Activated B cell treated with CpG ODN at 0.5 μM for 24 hours (primary cell): ENCODE measurements at regions of chr22 and their contacts with region 1.

Region 1: DNA sequence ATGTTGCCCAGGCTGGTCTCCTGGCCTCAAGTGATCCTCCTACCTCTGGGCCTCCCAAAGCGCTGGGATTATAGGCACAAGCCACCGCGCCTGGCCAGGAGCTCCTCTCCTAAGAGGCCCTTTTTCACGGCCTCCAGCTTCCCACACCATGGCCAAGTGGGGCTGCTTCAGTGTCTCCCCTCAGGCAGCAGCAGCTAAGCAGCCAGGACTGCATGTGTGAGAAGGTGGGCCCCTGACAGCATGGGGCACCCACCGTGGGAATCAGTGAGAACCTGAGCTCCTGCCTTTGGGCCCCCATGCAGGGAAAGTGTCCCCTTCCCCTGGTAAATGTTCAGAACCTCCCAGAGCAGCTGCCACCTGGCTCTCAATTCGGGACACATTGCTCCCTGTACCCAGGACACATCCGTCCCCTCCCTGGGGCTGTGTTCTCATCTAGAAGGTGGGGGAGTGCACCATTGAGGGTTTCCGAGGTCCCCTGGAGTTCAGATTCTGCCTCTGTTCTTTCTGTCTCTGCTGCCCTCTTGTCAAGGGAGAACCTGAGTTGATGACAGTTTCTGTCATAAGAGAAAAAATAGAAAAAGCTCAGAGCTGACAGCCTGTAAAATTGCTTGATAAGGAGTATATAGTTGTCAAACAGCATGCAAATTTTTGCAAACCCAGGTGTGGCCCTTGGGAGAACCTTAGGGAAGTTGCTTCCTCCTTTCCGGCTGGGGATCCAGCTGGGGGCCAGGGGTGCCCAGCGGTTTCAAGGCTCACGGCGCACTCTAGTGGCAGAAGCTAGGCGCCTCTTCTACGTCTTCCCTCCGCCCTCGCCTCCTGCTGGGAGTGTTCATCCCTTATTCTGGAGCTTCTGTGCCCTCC is 29.7 kb downstream of the FAM83F start:
- DNase-seq: peak; percentile 46
- ATAC-seq: peak; percentile 87
- H3K4me3 Mint-ChIP-seq: no peak overlapping the region
- H3K27ac Mint-ChIP-seq: no peak overlapping the region
- H3K4me1 Mint-ChIP-seq: peaks cover 5% of the 10 kb centered on the region
- H3K27me3 Mint-ChIP-seq: no peaks in the 10 kb centered on the region
- CTCF ChIP-seq: peak; percentile 50

Region 2: DNA sequence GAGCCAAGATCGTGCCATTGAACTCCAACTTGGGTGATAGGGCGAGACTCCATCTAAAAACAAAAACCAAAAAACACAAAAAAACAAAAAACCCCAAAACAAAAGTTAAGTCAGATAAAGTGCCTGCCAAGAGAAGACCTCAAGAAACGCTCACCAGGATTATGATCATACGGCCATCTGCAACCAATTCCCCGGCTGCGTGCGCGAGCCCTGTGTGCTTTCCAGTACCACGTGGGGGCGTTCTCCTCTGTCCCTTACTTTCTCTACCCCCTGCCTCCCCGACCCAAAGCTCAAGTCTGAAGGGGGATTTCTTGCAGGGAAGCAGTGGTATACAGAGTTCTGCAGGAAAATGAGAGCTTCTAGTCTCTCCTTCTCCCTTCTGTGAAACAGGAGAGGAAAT is 481.3 kb before region 1 on chr22:
- CTCF ChIA-PET with region 1: interaction called, 154 read pairs
- POLR2A ChIA-PET with region 1: no interaction called
- intact Hi-C with region 1: no loop called
- DNase-seq: no peak
- ATAC-seq: peak; percentile 54
- H3K4me3 Mint-ChIP-seq: no peak overlapping the region
- H3K27ac Mint-ChIP-seq: no peak overlapping the region
- H3K4me1 Mint-ChIP-seq: peaks cover 4% of the 10 kb centered on the region
- H3K27me3 Mint-ChIP-seq: peaks cover 37% of the 10 kb centered on the region
- CTCF ChIP-seq: no peak

Region 3: DNA sequence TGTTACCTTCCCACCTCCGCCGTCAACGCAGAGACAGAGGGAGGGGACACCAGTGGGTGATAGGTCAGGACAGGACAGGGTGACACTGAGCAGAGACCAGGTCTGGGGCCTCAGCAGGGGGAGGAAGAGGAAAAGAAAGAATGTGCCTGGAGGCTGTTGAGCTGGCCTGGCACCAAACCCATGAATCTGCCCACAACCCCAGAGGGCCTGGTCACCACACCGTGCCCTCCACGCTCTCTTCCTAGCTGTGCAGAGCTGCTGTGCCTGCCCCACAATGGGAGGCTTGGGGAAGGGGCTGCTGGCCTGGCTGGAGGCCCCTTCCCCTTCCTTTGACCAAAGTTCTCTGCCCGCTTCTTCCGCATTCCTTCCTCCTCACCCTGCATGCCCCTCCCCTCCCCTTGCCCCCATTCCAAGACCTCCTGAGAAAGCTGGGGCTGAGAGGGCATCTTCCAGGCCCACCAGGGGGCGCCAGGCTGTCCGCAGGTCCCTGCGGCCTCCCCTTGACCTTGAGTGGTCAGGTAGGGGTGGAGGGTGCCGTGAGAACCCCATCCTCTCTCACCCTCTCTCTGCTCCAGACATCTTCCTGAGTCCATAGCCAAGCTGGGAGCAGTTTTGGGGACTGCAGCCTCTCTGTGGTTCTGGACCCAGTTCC is 464.9 kb before region 1 on chr22:
- CTCF ChIA-PET with region 1: interaction called, 13 read pairs
- POLR2A ChIA-PET with region 1: no interaction called
- intact Hi-C with region 1: no loop called
- DNase-seq: no peak
- ATAC-seq: no peak
- H3K4me3 Mint-ChIP-seq: no peak overlapping the region
- H3K27ac Mint-ChIP-seq: no peak overlapping the region
- H3K4me1 Mint-ChIP-seq: peaks cover 9% of the 10 kb centered on the region
- H3K27me3 Mint-ChIP-seq: peaks cover 40% of the 10 kb centered on the region
- CTCF ChIP-seq: no peak

Region 4: GRCh38 chr22:39622881-39623367 is 401.5 kb before region 1 on chr22:
- CTCF ChIA-PET with region 1: interaction called, 19 read pairs
- POLR2A ChIA-PET with region 1: no interaction called
- intact Hi-C with region 1: loop called (anchors 1 kb)
- DNase-seq: peak; percentile 58
- ATAC-seq: peak; percentile 64
- H3K4me3 Mint-ChIP-seq: no peak overlapping the region
- H3K27ac Mint-ChIP-seq: no peak overlapping the region
- H3K4me1 Mint-ChIP-seq: peaks cover 2% of the 10 kb centered on the region
- H3K27me3 Mint-ChIP-seq: peaks cover 30% of the 10 kb centered on the region
- CTCF ChIP-seq: no peak

Region 5: GRCh38 chr22:39943337-39943736 is 81.1 kb before region 1 on chr22:
- CTCF ChIA-PET with region 1: interaction called, 16 read pairs
- POLR2A ChIA-PET with region 1: no interaction called
- intact Hi-C with region 1: loop called (anchors 2 kb)
- DNase-seq: no peak
- ATAC-seq: no peak
- H3K4me3 Mint-ChIP-seq: no peak overlapping the region
- H3K27ac Mint-ChIP-seq: no peak overlapping the region
- H3K4me1 Mint-ChIP-seq: peaks cover 71% of the 10 kb centered on the region
- H3K27me3 Mint-ChIP-seq: no peaks in the 10 kb centered on the region
- CTCF ChIP-seq: no peak

Region 6: GRCh38 chr22:39973656-39974055 is 50.8 kb before region 1 on chr22:
- CTCF ChIA-PET with region 1: interaction called, 3 read pairs
- POLR2A ChIA-PET with region 1: no interaction called
- intact Hi-C with region 1: loop called (anchors 5 kb)
- DNase-seq: no peak
- ATAC-seq: no peak
- H3K4me3 Mint-ChIP-seq: no peak overlapping the region
- H3K27ac Mint-ChIP-seq: no peak overlapping the region
- H3K4me1 Mint-ChIP-seq: no peaks in the 10 kb centered on the region
- H3K27me3 Mint-ChIP-seq: no peaks in the 10 kb centered on the region
- CTCF ChIP-seq: no peak

Region 7: DNA sequence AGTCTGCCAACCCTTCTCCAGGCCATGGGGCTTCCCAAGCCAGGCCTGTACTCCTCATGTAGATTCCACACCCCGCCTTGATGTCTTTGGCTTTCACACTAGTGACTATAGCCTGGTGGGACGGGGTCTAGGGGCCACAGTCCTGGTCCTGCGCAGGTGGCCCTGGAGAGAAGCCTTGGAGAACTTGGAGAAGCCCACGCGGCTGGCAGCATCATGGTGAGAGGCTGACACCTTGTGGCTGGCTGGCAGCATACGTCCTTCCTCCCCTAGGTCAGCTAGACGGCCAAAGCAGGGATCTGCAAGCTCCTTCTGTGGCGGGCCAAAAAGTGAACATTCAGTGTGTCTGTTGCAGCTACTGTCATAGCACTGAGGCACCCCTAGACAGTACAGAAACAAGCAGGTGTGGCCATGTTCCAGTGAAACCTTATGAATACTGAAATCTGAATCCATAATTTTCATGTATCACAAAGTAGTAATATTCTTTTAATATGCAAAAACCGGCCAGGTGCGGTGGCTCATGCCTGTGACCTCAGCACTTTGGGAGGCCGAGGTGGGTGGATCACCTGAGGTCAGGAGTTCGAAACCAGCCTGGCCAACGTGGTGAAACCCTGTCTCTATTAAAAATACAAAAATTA is 12.3 kb after region 1 on chr22:
- CTCF ChIA-PET with region 1: interaction called, 43 read pairs
- POLR2A ChIA-PET with region 1: no interaction called
- intact Hi-C with region 1: no loop called
- DNase-seq: peak; percentile 43
- ATAC-seq: peak; percentile 95
- H3K4me3 Mint-ChIP-seq: no peak overlapping the region
- H3K27ac Mint-ChIP-seq: no peak overlapping the region
- H3K4me1 Mint-ChIP-seq: no peaks in the 10 kb centered on the region
- H3K27me3 Mint-ChIP-seq: peaks cover 19% of the 10 kb centered on the region
- CTCF ChIP-seq: no peak